ENCODE measurements at regions of chr2 and their contacts with region 1.

Region 1: DNA sequence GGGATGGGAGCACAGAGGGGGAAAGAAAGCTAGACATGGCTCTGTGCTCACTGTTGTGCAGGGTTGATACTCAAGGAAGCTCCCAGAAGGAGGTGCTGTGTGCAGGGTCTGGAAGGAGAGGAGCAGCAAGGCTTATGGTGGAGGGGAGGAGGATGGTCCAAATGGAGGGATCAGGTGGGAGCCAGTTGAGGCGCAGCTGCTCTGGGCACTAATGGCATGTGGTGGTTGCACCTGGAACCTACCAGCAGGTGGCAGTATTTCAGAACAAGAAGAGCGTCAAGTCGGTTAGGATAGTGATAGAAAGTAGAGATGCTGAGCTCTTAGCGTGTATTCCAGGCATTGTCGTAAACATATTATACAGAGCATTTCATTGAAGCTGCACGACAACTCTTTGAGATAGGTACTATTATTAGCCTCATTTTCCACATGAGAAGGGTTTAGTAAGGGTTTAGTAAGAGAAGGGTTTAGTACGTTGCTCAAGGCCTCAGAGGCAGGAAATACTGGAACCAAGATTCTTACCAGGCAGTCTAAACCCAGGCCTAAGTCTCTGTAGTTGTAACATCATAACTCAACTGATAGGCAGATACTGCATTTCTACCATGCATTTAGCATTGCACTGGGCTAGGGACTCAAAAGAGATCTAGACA is 223.7 kb downstream of the CYP26B1 start:
- DNase-seq: peak; percentile 53 to 71
- ATAC-seq: peak; percentile 86 to 95 (median 90)
- H3K4me3 ChIP-seq: no peak overlapping the region
- H3K27ac ChIP-seq: no peak overlapping the region
- H3K4me1 ChIP-seq: peaks cover 3% of the 10 kb centered on the region
- H3K27me3 ChIP-seq: no peaks in the 10 kb centered on the region
- CTCF ChIP-seq: peak; percentile 89

Region 2: DNA sequence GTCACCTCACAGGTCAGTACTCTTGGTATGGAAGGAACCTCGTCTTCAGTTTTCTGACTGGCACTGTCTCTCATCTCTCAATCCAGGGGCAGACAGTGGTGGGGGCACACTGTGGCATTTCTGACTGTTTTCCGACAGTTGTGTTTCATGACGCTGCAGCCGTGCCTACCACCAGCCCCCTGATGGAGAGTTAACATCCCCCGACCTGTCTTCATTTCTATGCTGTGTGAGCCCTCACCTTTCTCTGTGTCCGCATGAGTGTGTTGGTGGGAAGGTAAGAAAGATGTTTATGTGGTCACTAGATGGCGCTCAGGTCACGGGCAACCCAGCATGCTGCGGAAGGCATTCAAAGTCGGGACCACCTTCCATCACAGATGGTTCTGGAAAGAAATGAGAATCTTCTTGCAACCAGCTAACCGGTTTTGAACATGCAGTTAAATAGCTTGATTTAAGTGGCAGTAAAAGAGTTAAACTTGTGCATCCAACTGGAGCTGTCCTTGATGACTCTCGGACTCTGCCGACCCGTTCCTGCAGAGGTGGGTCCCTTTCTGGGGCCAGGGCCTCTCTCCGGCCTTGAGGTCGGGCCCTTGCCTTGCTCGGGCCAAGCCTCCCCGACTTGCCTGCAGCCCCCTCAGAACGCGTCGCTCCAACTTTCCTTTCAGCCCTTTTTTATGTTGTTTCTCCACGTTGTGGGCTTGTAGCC is 378.3 kb before region 1 on chr2:
- intact Hi-C with region 1: loop called in 1 of 2 experiments (anchors 5 kb)
- DNase-seq: peak in 1 of 2 donors; percentile 66
- ATAC-seq: peak; percentile 34 to 76 (median 60)
- H3K4me3 ChIP-seq: peak overlapping the region; percentile 22
- H3K27ac ChIP-seq: peak overlapping the region; percentile 55
- H3K4me1 ChIP-seq: peaks cover 5% of the 10 kb centered on the region
- H3K27me3 ChIP-seq: no peaks in the 10 kb centered on the region
- CTCF ChIP-seq: peak; percentile 61

Region 3: DNA sequence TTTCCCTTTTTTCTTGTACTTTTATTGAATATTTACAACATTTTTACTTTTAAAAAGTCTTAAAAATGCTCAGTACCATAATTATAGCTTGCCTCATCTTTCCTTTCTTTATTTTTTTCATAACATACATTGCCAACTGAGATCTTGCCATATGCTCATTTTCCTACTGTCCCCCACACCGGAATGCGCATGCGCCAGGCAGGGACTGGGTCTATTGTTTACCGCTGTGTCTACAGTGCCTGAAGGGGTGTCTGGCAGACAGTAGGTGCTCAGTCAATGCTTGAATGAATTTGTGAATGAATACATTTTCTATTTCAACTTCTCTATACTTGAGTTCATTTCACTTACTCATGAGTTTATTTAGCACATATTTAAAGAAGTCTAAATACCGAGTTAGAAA is 65.7 kb after region 1 on chr2:
- intact Hi-C with region 1: loop called (anchors 2 to 5 kb)
- DNase-seq: no peak
- ATAC-seq: no peak
- H3K4me3 ChIP-seq: no peak overlapping the region
- H3K27ac ChIP-seq: no peak overlapping the region
- H3K4me1 ChIP-seq: no peaks in the 10 kb centered on the region
- H3K27me3 ChIP-seq: no peaks in the 10 kb centered on the region
- CTCF ChIP-seq: no peak

Region 4: DNA sequence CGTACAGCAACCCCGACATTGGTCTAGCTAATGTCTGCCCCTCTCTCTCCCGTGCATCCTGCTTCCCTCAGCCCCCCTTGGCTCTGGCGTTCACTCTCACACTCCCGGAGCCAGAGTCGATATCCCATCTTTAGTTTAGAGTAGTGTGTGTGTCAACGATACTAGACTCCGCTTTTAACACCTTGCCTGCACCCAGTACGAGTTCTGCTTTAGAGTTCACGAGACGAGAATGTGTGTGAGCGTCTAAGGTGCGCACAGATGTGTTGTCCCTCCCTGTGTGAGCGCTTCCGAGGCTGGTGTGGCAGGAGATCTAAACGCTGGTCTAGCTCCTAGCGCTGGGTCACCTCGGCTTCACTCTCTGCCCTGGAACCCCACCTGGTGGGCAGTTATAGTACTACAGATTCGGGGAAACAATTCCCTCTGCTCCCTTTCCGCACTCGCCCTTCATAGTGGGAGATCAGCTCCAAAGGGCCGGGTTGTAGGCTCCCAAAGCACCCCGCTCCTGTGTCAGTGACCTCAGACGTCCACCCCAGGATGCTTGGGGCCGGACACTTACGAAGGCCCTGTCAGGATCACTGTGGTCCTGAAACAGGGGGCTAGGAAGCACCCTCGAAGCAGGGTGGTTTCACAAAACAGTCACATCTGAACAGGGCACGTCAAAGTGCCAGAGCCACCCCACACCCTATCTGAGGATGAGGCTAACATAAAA is 226.3 kb after region 1 on chr2:
- intact Hi-C with region 1: loop called (anchors 2 to 5 kb)
- DNase-seq: peak; percentile 66 to 83
- ATAC-seq: peak; percentile 82 to 89 (median 86)
- H3K4me3 ChIP-seq: peak overlapping the region; percentile 73
- H3K27ac ChIP-seq: no peak overlapping the region
- H3K4me1 ChIP-seq: peaks cover 37% of the 10 kb centered on the region
- H3K27me3 ChIP-seq: peaks cover 0 to 53% (median 22%) of the 10 kb centered on the region in 3 donors
- CTCF ChIP-seq: peak; percentile 88

Region 5: GRCh38 chr2:72293620-72294019 is 369.6 kb after region 1 on chr2:
- intact Hi-C with region 1: no loop called
- DNase-seq: no peak
- ATAC-seq: no peak
- H3K4me3 ChIP-seq: no peak overlapping the region
- H3K27ac ChIP-seq: no peak overlapping the region
- H3K4me1 ChIP-seq: no peaks in the 10 kb centered on the region
- H3K27me3 ChIP-seq: no peaks in the 10 kb centered on the region
- CTCF ChIP-seq: no peak

Region 6: GRCh38 chr2:72745679-72746368 is 821.8 kb after region 1 on chr2:
- intact Hi-C with region 1: loop called (anchors 2 to 10 kb)
- DNase-seq: no peak
- ATAC-seq: peak; percentile 55 to 83 (median 62)
- H3K4me3 ChIP-seq: peak overlapping the region; percentile 29
- H3K27ac ChIP-seq: no peak overlapping the region
- H3K4me1 ChIP-seq: no peaks in the 10 kb centered on the region
- H3K27me3 ChIP-seq: no peaks in the 10 kb centered on the region
- CTCF ChIP-seq: peak; percentile 82

Measured in psoas muscle (tissue), 8 donors.